Cardiac septum (tissue), 1 donor: ENCODE measurements at regions of chr7 and their contacts with region 1.

Region 1: DNA sequence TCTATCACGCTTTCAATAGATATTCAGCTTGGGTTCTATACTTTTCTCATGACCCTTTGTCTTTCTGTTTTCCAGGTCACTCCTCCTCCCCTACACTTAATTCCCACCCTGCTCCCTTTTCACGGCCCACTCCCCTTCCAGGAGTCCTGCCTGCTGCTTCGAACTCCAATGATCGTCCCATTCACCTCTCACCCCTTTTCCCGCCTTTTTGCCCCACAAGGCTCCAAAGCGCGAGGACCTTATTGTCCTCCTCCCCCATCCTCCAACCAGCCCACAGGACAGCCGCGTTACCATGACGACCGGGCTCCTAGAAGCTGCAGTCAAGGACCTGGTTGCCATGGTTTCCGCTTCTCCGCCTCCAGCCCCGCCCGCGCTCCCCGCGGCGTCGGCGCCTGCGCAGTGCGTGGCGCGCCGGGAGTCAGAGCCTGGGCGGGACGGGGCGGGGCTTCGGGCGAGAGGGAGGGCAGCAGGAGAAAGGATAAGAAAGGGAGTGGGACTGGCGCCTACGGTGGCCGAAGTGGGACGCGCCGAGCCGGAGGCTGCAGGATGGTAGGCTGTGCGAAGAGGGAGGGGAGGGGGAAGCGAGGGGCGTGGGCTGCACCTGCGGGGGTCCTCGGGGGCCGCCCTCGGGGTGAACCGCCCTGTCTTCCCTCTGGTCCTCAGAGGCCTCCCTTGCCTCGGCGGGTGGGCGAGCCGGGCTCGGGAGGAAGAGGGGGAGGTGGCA is at the start of gene AP1S1:
- DNase-seq: peak; percentile 95
- total RNA-seq, gene AP1S1: 12.1 TPM

Region 2: DNA sequence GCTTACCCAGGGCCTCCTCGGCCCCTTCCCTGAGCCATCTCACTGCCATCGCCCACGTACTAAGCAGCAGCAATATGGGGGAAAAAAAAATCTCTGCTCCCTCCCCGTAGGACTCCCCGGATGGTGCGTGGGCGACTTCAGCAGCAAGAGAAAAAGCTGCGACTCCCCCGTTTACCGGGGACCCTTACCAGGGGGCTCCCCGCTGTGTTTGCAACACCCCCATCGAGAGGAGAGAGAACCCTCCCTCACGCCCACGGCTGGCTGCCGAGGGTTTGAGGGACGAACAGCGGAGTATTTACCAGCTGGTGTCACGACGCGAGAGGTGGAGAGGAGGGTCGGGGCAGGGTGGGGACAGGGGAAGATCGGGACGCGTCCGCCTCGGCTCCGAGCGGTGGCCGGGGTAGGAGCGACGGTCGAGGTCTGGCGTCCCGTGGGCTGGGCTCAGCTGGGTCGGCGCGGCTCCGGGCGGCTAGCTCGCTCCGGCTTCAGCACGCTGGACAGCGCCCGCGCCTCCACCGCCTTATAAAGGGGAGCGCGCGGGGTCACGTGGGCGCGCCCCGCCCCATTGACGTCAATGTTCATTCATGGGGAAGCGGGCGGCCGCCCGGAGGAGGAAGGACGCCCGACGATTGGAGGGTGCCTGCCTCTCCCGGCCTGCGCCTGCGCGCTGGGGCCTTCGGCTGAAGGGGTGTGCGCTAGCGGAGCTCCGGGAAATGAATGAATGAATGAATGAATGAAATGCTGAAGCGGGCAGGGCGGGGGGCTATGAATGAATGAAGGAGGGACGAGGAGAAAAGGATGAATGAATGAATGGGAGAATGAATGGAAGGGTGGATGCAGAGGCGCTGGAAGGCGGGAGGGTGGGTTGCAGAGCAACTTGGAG is 11.2 kb after region 1 on chr7 and contains the start of gene VGF:
- intact Hi-C with region 1: loop called (anchors 1 kb)
- DNase-seq: peak; percentile 95
- total RNA-seq, gene VGF: 0.08 TPM